Naive thymus-derived CD4-positive, alpha-beta T cell (primary cell): ENCODE measurements at regions of chr17 and their contacts with region 1.

Region 1: GRCh38 chr17:65039336-65039988 is 17.1 kb downstream of the GNA13 start:
- DNase-seq: peak in 7 of 9 donors; percentile 55 to 85 (median 77)
- ATAC-seq: peak; percentile 95
- H3K4me3 ChIP-seq: peak overlapping the region; percentile 18
- H3K4me3 Mint-ChIP-seq: peak overlapping the region; percentile 34 to 92 (median 78)
- H3K27ac ChIP-seq: peak overlapping the region; percentile 79
- H3K27ac Mint-ChIP-seq: peak overlapping the region; percentile 78 to 97 (median 93)
- H3K4me1 ChIP-seq: peaks cover 55 to 68% of the 10 kb centered on the region in 2 donors
- H3K4me1 Mint-ChIP-seq: peaks cover 67 to 90% (median 83%) of the 10 kb centered on the region in 7 donors
- H3K27me3 ChIP-seq: no peaks in the 10 kb centered on the region
- H3K27me3 Mint-ChIP-seq: no peaks in the 10 kb centered on the region

Region 2: GRCh38 chr17:65005858-65006257 is 33.6 kb before region 1 on chr17:
- CTCF ChIA-PET with region 1: no interaction called
- POLR2A ChIA-PET with region 1: no interaction called
- intact Hi-C with region 1: no loop called
- DNase-seq: no peak
- ATAC-seq: no peak
- H3K4me3 ChIP-seq: no peak overlapping the region
- H3K4me3 Mint-ChIP-seq: no peak overlapping the region
- H3K27ac ChIP-seq: no peak overlapping the region
- H3K27ac Mint-ChIP-seq: peak overlapping the region in 2 of 9 donors; percentile 10 to 36
- H3K4me1 ChIP-seq: no peaks in the 10 kb centered on the region
- H3K4me1 Mint-ChIP-seq: peaks cover 5 to 20% (median 14%) of the 10 kb centered on the region in 7 donors
- H3K27me3 ChIP-seq: no peaks in the 10 kb centered on the region
- H3K27me3 Mint-ChIP-seq: peaks cover 0 to 8% (median 0%) of the 10 kb centered on the region in 5 donors

Region 3: GRCh38 chr17:65027305-65027704 is 12.2 kb before region 1 on chr17:
- CTCF ChIA-PET with region 1: no interaction called
- POLR2A ChIA-PET with region 1: interaction called, 8 read pairs
- intact Hi-C with region 1: loop called (anchors 1 kb)
- DNase-seq: peak in 5 of 9 donors; percentile 19 to 68 (median 36)
- ATAC-seq: peak; percentile 82
- H3K4me3 ChIP-seq: no peak overlapping the region
- H3K4me3 Mint-ChIP-seq: peak overlapping the region in 7 of 10 donors; percentile 32 to 73 (median 56)
- H3K27ac ChIP-seq: peak overlapping the region; percentile 8
- H3K27ac Mint-ChIP-seq: peak overlapping the region in 6 of 9 donors; percentile 31 to 85 (median 58)
- H3K4me1 ChIP-seq: peaks cover 49 to 61% of the 10 kb centered on the region in 2 donors
- H3K4me1 Mint-ChIP-seq: peaks cover 54 to 96% (median 86%) of the 10 kb centered on the region in 7 donors
- H3K27me3 ChIP-seq: no peaks in the 10 kb centered on the region
- H3K27me3 Mint-ChIP-seq: no peaks in the 10 kb centered on the region